ENCODE measurements at regions of chr11 and their contacts with region 1.

Region 1: DNA sequence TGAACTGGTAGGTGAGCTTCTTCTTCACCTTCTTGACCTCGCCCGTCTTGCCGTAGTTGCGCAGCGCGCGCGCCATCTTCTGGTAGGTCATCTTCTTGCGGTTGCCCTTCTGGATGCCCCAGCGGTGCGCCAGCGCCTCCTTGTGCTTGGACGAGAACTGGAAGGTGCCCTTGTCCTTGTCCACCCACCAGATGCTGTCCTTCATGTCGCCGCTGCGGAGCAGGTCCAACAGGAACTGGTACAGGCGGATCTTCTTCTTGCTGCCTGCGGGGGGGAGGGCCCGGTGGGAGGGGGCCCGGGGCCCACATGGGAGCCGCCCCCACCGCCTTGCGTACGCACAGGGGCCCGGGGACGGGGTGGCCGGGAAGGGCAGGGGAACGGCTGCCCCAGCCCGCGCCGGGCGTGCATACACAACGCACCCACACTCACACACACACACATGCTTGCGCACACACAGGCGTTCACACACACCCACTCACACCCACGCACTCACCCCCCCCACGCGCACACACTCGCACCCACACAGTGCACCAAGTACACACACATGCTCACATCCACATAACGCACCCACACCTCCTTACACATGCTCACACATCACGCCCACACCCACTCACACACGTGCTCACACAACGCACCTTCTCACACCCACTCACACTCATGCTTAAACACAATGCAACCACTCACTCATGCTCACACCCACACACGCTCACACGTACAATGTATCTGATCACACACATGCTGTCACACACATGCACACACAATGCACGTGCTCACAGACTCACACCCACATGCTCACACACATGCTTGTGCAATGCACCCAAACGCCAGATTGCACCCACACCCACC is 3.0 kb upstream of the MYBPC3 start:
- DNase-seq: peak; percentile 88
- ATAC-seq: peak; percentile 98
- H3K4me3 ChIP-seq: no peak overlapping the region
- H3K27ac ChIP-seq: no peak overlapping the region
- H3K4me1 ChIP-seq: no peaks in the 10 kb centered on the region
- H3K27me3 ChIP-seq: no peaks in the 10 kb centered on the region; the same call in 1 of the 2 replicates
- CTCF ChIP-seq: peak; percentile 100
- POLR2A ChIP-seq: no peak
- RAD21 ChIP-seq: peak; percentile 98

Region 2: DNA sequence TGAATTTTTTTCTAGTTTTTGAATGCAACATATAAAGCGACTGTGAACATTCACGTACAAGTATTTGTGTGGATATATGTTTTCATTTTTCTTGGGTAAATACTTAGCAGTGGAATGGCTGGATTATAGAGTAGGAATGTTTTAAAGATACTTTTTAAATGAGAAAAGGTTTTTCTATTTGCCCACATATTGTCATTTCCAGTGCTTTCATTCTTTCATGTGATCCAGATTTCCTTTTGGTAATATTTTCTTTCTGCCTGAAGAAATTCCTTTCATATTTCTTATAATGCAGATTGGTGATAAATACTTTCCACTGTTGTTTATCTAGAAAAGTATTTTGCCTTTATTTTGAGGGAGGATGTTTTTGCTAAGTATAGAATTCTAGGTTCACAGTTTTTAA is 132.8 kb before region 1 on chr11:
- CTCF ChIA-PET with region 1: no interaction called
- POLR2A ChIA-PET with region 1: no interaction called
- dilution Hi-C with region 1: no loop called
- in situ Hi-C with region 1: no loop called
- intact Hi-C with region 1: no loop called
- DNase-seq: no peak
- ATAC-seq: no peak; the same call in 1 of the 2 replicates
- H3K4me3 ChIP-seq: no peak overlapping the region
- H3K27ac ChIP-seq: no peak overlapping the region
- H3K4me1 ChIP-seq: peaks cover 9% of the 10 kb centered on the region
- H3K27me3 ChIP-seq: no peaks in the 10 kb centered on the region
- CTCF ChIP-seq: no peak
- POLR2A ChIP-seq: no peak
- RAD21 ChIP-seq: no peak

Region 3: DNA sequence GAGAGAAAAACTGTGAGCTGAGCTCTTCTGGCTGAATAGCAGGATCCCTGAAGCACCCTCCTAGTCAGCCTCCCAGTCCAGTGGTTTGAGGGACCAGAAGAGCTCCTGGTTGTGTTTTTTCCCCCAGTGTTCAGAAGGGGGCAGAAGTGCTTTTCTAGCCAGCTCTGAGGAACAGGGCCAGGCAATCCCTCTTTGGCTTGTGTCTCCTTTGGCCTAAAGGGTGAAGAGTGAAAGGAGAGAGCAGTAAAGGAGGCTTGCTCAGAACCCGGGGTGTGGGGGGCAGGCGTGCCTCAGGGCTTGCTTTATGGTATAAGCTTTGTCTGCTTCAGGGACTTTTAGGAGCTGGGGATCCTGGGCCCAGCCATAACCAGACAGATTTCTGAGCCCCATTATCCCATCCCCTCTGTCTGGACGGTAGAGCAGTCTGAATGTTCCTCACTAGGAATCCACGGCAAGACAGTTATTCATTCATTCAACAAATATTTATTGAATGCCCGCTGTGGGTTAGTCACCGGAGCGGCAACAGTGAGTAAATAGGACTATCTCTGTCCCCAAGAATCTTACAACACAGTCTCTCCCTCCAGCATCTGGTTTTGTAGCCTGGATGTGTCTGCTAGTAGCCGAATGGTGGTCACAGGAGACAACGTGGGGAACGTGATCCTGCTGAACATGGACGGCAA is 121.4 kb before region 1 on chr11:
- CTCF ChIA-PET with region 1: interaction called, 4 read pairs
- POLR2A ChIA-PET with region 1: no interaction called
- dilution Hi-C with region 1: no loop called
- in situ Hi-C with region 1: no loop called
- intact Hi-C with region 1: loop called (anchors 1 kb)
- DNase-seq: peak; percentile 67
- ATAC-seq: peak; percentile 83
- H3K4me3 ChIP-seq: no peak overlapping the region
- H3K27ac ChIP-seq: peak overlapping the region; percentile 51
- H3K4me1 ChIP-seq: peaks cover 14% of the 10 kb centered on the region
- H3K27me3 ChIP-seq: no peaks in the 10 kb centered on the region
- CTCF ChIP-seq: peak; percentile 50
- POLR2A ChIP-seq: no peak
- RAD21 ChIP-seq: peak; percentile 43

Region 4: DNA sequence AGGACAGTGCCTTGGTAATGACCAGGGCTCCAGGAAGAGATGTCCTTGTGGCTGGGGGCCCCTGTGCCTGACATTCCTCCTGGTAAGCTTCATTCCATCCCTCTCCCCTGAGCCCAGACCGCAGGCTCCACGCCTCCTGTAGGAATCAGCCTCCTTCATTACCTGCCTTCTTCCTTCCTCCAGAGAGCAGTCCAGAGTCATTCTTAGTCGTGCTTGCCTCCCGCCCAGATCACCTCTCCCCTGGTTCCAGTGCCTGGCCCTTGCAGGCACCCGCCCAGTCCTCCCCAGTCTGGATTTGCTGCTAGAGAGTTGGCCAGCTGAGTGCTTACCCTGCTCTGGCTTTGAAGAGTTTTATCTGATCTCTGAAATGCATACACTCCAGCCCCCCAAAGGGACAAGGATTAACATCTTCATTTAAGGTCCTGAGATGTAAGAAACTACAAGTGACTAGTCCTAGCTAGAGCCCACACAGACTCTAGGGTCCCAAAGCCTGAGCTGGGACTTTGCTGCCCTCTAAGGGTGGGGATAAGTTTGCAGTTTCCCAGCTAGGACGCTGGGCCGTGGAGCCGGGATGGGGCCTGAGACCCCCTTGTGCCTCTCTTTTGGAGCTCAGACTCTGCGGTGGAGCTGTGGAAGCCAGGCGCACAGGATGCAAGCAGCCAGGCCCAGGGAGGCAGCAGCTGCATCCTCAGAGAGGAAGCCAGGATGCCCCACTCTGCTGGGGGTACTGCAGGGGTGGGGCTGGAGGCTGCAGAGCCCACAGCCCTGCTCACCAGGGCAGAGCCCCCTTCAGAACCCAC is 96.1 kb before region 1 on chr11:
- CTCF ChIA-PET with region 1: no interaction called
- POLR2A ChIA-PET with region 1: no interaction called
- dilution Hi-C with region 1: no loop called
- in situ Hi-C with region 1: no loop called
- intact Hi-C with region 1: loop called (anchors 1 kb)
- DNase-seq: peak; percentile 30
- ATAC-seq: peak; percentile 55
- H3K4me3 ChIP-seq: no peak overlapping the region
- H3K27ac ChIP-seq: 0 out of 2 replicates have a peak overlapping the region, but pooled peaks have one; percentile 10
- H3K4me1 ChIP-seq: peaks cover 21% of the 10 kb centered on the region
- H3K27me3 ChIP-seq: no peaks in the 10 kb centered on the region
- CTCF ChIP-seq: peak; percentile 60
- POLR2A ChIP-seq: no peak
- RAD21 ChIP-seq: peak; percentile 68

Region 5: DNA sequence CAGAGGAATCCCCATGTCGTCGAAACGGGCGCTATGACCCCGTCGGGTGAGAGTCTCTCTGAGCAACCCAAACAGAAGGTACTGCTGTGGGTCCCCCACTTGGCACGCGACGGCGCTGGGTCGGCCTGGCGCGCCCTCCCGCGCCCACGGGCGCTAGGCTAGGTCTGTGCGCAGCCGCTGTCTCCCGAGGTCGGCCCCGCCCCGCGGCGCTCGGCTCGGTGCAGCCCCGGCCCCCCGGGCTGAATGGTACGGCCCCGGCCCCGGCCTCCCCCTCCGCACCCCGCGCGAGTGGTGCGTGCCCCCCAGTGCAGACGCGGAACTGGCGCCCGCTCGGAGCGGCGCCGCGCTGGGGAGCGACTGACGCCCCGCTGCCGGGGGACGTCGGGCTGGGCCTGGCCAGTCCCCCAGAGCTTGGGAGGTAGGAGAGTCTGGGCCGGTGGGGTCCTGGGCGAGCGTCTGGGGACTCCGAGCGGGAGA is 85.6 kb before region 1 on chr11 and contains the start of gene MADD:
- CTCF ChIA-PET with region 1: interaction called, 3 read pairs
- POLR2A ChIA-PET with region 1: no interaction called
- dilution Hi-C with region 1: no loop called
- in situ Hi-C with region 1: no loop called
- intact Hi-C with region 1: loop called (anchors 2 kb)
- DNase-seq: peak; percentile 78
- ATAC-seq: peak; percentile 91
- H3K4me3 ChIP-seq: peak within 1 kb of the TSS; percentile 89
- H3K27ac ChIP-seq: peak within 1 kb of the TSS; percentile 99
- H3K4me1 ChIP-seq: peaks cover 18% of the 10 kb centered on the region
- H3K27me3 ChIP-seq: no peaks in the 10 kb centered on the region
- CTCF ChIP-seq: no peak
- POLR2A ChIP-seq: peak; percentile 68
- RAD21 ChIP-seq: no peak
- total RNA-seq, gene MADD: 11.1 and 13.3 TPM in 2 replicates

Region 6: DNA sequence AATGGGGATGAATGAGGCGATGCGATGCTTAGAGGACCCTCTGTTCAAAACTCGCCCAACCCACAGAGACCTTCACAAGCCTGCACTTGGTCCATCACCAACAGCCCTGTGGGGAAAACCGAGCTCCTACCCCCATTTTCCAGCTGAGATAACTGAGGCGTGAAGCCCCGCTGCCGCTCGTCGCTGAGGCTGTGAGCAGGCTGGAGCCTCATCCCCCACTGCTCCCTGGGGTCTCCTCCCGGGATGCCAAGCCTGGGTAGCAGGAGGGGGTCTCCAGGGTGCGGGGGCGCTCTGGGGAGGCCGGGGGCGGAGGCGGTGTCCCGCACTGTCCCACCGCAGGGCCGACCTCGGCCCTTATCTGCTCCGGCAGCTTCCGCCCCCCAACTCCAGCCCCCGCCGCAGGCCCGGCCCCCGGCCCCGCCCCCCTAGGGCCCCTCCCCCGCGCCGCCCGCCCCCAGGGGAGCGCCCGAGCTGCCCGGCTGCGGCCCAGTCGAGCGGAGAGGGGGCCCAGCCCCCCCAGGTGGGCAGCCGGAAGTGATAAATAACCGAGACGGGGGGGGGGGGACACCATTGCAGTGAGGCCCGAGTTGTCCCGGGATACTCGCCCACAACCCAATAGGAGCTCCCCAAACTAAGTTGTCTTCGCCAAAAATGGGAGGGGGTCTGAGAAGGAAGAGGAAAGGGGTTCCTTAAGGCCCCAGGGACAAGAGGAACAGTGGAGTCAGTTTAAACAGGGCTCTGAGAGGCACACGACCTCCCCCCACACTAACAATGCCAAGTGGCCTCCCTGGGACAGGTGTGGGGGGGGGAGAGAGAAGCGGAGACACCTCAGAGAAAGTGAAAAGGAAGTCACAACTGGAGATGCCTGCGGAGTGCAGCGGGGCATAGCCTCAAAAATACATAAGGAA is 44.6 kb after region 1 on chr11:
- CTCF ChIA-PET with region 1: no interaction called
- POLR2A ChIA-PET with region 1: no interaction called
- dilution Hi-C with region 1: no loop called
- in situ Hi-C with region 1: no loop called
- intact Hi-C with region 1: no loop called
- DNase-seq: no peak
- ATAC-seq: peak; percentile 86
- H3K4me3 ChIP-seq: peak overlapping the region; percentile 78
- H3K27ac ChIP-seq: peak overlapping the region; percentile 37; the same call in 1 of the 2 replicates
- H3K4me1 ChIP-seq: peaks cover 8% of the 10 kb centered on the region
- H3K27me3 ChIP-seq: no peaks in the 10 kb centered on the region
- CTCF ChIP-seq: no peak
- POLR2A ChIP-seq: no peak
- RAD21 ChIP-seq: no peak

Region 7: GRCh38 chr11:48034926-48035871 is 679.7 kb after region 1 on chr11:
- CTCF ChIA-PET with region 1: no interaction called
- POLR2A ChIA-PET with region 1: no interaction called
- dilution Hi-C with region 1: no loop called
- in situ Hi-C with region 1: no loop called
- intact Hi-C with region 1: no loop called
- DNase-seq: no peak
- ATAC-seq: no peak
- H3K4me3 ChIP-seq: no peak overlapping the region
- H3K27ac ChIP-seq: no peak overlapping the region
- H3K4me1 ChIP-seq: peaks cover 7% of the 10 kb centered on the region
- H3K27me3 ChIP-seq: no peaks in the 10 kb centered on the region
- CTCF ChIP-seq: no peak
- POLR2A ChIP-seq: no peak
- RAD21 ChIP-seq: no peak

Measured in IMR-90 (cell line).